GM12878 (cell line): ENCODE measurements at regions of chr6 and their contacts with region 1.

Region 1: DNA sequence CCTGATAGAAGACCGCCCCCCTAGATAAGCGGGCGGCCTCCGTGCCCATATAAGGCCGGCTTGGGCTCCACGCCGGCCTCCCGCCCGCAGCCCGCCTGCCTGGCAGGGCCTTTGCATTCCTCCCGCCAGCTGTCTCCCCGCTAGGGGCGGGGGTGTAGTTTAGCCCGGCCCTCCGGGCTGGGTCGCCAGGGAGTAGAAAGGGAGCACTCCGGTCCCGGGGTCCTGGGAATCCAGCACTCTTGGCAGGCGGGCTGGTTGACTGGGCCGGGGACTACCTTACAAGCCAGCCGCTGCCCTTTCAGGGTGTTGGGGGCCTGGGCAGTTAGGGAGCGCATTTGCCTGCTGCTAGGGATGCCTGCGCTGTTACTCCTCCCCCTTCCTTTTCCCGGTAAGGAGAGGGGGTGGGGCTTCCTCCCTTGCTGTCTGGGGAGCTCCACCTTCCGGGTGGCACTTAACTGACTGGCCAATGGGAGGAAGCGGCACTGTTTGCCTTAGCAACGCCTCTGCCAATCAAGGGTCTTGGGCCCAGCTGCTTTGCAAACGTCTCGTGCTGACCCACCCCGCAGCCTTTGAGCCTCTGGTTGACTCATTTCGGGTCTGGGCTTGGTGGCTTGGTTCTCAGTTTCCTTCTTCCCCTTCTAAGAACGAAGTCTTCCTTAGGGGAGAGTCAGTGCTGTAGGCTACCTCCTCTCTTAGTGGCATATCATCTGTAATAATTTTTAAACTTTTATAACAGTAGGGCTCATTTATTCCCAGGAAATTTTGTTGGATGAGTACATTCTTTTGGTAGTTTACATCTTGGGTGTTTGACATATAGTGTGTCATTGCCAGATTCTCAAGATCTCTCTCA is 3.4 kb downstream of the SRF start:
- DNase-seq: peak; percentile 98
- ATAC-seq: peak; percentile 83
- H3K4me3 ChIP-seq: peak overlapping the region; percentile 94
- H3K27ac ChIP-seq: peak overlapping the region; percentile 92
- H3K4me1 ChIP-seq: peaks cover 26% of the 10 kb centered on the region
- H3K27me3 ChIP-seq: no peaks in the 10 kb centered on the region
- CTCF ChIP-seq: 0 out of 6 replicates have a peak, but pooled peaks of 1 of the 3 experiments have one; percentile 12
- EP300 ChIP-seq: peak; percentile 41 to 70; a peak in 1 of 4 replicates
- POLR2A ChIP-seq: peak; percentile 61; the same call in 1 of the 2 replicates
- RAD21 ChIP-seq: no peak

Region 2: GRCh38 chr6:43013843-43014433 is 160.6 kb before region 1 on chr6 and contains the starts of genes KLHDC3 and MEA1:
- CTCF ChIA-PET with region 1: no interaction called
- POLR2A ChIA-PET with region 1: no interaction called
- RAD21 ChIA-PET with region 1: interaction called, 4 read pairs
- SMC1A ChIA-PET with region 1: no interaction called
- in situ Hi-C with region 1: no loop called
- intact Hi-C with region 1: loop called (anchors 1 kb)
- DNase-seq: peak; percentile 100
- ATAC-seq: peak; percentile 96
- H3K4me3 ChIP-seq: peak within 1 kb of the TSS; percentile 85
- H3K27ac ChIP-seq: peak within 1 kb of the TSS; percentile 60
- H3K4me1 ChIP-seq: peaks cover 7% of the 10 kb centered on the region
- H3K27me3 ChIP-seq: no peaks in the 10 kb centered on the region
- CTCF ChIP-seq: no peak
- EP300 ChIP-seq: no peak
- POLR2A ChIP-seq: peak; percentile 82
- RAD21 ChIP-seq: no peak
- polyA plus RNA-seq, gene KLHDC3: 2.4 to 8.9 TPM
- polyA plus RNA-seq, gene MEA1: 90.7 to 105 TPM

Region 3: GRCh38 chr6:43199912-43200311 is 25.4 kb after region 1 on chr6:
- CTCF ChIA-PET with region 1: no interaction called
- POLR2A ChIA-PET with region 1: no interaction called
- RAD21 ChIA-PET with region 1: no interaction called
- SMC1A ChIA-PET with region 1: no interaction called
- in situ Hi-C with region 1: no loop called
- intact Hi-C with region 1: no loop called
- DNase-seq: no peak
- ATAC-seq: no peak
- H3K4me3 ChIP-seq: no peak overlapping the region
- H3K27ac ChIP-seq: no peak overlapping the region
- H3K4me1 ChIP-seq: no peaks in the 10 kb centered on the region
- H3K27me3 ChIP-seq: no peaks in the 10 kb centered on the region
- CTCF ChIP-seq: no peak
- EP300 ChIP-seq: no peak
- POLR2A ChIP-seq: no peak
- RAD21 ChIP-seq: no peak

Region 4: DNA sequence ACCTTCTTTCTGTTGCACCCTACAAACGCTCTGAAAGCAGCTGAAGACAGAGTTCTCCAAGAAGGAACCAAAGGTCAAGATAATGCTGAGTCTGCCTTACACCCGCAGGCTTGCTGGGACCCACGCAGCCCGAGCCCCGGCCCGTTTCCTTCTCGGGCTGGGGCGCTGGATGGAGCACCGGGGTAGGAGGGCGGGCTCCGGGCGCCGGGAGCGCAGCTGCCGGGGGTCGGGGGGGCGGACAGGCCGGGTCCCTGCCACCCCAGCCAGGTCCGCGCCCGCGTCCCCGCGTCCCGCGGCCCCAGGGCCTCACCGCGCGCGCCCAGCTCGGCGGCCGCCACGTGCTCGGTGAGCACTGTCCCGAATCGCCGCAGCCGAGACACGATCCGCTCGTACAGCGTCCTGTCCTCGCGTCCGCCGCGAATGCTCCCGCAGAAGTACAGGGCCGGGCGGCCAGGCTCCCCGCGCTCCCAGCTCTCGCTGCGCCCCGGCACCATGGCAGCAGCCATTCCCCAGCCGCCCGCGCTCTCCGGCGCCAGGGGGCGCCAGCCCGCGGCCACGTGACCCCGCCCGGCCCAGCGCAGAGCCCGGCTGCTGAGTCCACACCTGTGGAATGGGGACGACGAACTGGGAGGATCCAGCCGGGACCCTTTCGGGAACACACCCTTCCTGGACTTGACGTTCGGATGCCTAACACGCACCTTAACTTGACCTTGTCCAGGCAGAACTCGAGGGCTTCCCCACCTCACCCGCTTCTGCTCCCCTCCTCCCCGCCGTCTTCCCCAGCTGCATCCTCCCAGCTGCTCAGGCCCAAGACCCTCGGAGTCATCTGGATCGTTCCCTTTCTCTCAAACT is 54.7 kb after region 1 on chr6 and contains the start of gene DNPH1:
- CTCF ChIA-PET with region 1: interaction called, 9 read pairs
- POLR2A ChIA-PET with region 1: interaction called, 26 read pairs
- RAD21 ChIA-PET with region 1: interaction called, 18 read pairs
- SMC1A ChIA-PET with region 1: interaction called, 10 read pairs
- in situ Hi-C with region 1: no loop called
- intact Hi-C with region 1: loop called (anchors 2 kb)
- DNase-seq: no peak
- ATAC-seq: peak; percentile 87
- H3K4me3 ChIP-seq: peak within 1 kb of the TSS; percentile 76
- H3K27ac ChIP-seq: peak within 1 kb of the TSS; percentile 60
- H3K4me1 ChIP-seq: peaks cover 22% of the 10 kb centered on the region
- H3K27me3 ChIP-seq: no peaks in the 10 kb centered on the region; a peak in 1 of 4 replicates
- CTCF ChIP-seq: peak; percentile 71 to 95 (median 91); a peak in 5 of 6 replicates
- EP300 ChIP-seq: no peak
- POLR2A ChIP-seq: peak; percentile 92
- RAD21 ChIP-seq: peak; percentile 56
- polyA plus RNA-seq, gene DNPH1: 7.0 to 16.5 TPM

Region 5: DNA sequence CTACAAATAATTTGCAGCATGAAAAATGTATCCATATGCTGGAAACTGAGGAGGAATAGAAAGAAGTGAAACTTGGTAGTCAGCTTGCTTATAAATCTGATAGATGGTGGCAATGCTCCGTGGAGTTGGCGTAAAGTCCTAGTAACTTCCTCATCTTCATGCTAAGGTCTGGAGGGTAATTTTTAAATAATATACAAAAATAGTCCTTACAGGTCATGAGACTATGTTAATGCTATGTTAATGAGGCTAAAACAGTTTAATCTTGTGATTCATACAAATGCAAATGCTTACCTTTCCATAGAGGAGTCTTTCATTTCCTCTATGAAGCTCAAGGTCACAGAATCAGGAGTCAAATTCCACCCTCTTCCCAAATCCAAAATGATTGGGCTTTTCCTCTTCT is 143.5 kb after region 1 on chr6:
- CTCF ChIA-PET with region 1: interaction called, 3 read pairs
- POLR2A ChIA-PET with region 1: interaction called, 10 read pairs
- RAD21 ChIA-PET with region 1: no interaction called
- SMC1A ChIA-PET with region 1: no interaction called
- in situ Hi-C with region 1: no loop called
- intact Hi-C with region 1: no loop called
- DNase-seq: no peak
- ATAC-seq: no peak
- H3K4me3 ChIP-seq: no peak overlapping the region
- H3K27ac ChIP-seq: no peak overlapping the region
- H3K4me1 ChIP-seq: peaks cover 26% of the 10 kb centered on the region
- H3K27me3 ChIP-seq: no peaks in the 10 kb centered on the region
- CTCF ChIP-seq: no peak
- EP300 ChIP-seq: no peak
- POLR2A ChIP-seq: no peak
- RAD21 ChIP-seq: no peak

Region 6: GRCh38 chr6:43516697-43517504 is 342.4 kb after region 1 on chr6 and contains the starts of genes POLR1C and YIPF3:
- CTCF ChIA-PET with region 1: no interaction called
- POLR2A ChIA-PET with region 1: interaction called, 4 read pairs
- RAD21 ChIA-PET with region 1: no interaction called
- SMC1A ChIA-PET with region 1: no interaction called
- in situ Hi-C with region 1: no loop called
- intact Hi-C with region 1: loop called (anchors 2 kb)
- DNase-seq: peak; percentile 95
- ATAC-seq: peak; percentile 95
- H3K4me3 ChIP-seq: peak within 1 kb of the TSS; percentile 80
- H3K27ac ChIP-seq: peak within 1 kb of the TSS; percentile 76
- H3K4me1 ChIP-seq: peaks cover 6% of the 10 kb centered on the region
- H3K27me3 ChIP-seq: no peaks in the 10 kb centered on the region
- CTCF ChIP-seq: no peak
- EP300 ChIP-seq: 0 out of 4 replicates have a peak, but pooled peaks of 1 of the 2 experiments have one; percentile 26
- POLR2A ChIP-seq: peak; percentile 96
- RAD21 ChIP-seq: no peak
- polyA plus RNA-seq, gene POLR1C: 164 to 180 TPM
- polyA plus RNA-seq, gene YIPF3: 25.0 to 29.8 TPM